Ascending aorta (tissue), 2 donors: ENCODE measurements at regions of chr11 and their contacts with region 1.

Region 1: DNA sequence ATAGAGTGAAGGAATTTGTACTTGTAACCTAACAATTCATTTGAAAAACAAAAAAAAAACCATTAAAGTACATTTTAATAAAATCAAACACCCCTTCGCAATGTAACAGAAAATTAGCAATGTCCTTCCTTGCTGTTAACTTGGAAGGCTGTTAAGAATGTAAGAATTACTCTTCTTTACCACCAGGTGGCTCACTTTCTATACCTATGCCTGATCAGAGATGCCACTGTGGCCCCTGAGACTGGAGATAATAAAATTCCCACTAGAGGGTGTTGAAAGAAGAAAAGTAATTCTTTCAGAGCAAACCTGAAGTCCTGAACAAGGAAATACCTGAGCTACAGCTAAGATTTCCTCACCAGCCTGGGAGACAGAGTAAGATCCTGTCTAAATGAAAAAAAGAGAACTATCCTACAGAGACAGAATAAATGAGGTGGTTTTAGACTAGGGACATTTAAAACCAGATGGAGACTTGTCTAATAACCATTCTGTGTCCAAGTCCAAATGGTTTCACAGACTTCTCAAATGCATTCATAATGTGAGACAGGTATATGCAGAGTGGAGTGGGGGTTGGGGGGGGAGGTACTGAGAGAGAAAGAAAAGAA is 1089.3 kb downstream of the FAM181B start:
- DNase-seq: no peak
- H3K4me3 ChIP-seq: no peak overlapping the region
- H3K27ac ChIP-seq: no peak overlapping the region
- H3K4me1 ChIP-seq: no peaks in the 10 kb centered on the region
- H3K27me3 ChIP-seq: no peaks in the 10 kb centered on the region
- CTCF ChIP-seq: peak in 2 of 3 experiments; percentile 23 to 52

Region 2: DNA sequence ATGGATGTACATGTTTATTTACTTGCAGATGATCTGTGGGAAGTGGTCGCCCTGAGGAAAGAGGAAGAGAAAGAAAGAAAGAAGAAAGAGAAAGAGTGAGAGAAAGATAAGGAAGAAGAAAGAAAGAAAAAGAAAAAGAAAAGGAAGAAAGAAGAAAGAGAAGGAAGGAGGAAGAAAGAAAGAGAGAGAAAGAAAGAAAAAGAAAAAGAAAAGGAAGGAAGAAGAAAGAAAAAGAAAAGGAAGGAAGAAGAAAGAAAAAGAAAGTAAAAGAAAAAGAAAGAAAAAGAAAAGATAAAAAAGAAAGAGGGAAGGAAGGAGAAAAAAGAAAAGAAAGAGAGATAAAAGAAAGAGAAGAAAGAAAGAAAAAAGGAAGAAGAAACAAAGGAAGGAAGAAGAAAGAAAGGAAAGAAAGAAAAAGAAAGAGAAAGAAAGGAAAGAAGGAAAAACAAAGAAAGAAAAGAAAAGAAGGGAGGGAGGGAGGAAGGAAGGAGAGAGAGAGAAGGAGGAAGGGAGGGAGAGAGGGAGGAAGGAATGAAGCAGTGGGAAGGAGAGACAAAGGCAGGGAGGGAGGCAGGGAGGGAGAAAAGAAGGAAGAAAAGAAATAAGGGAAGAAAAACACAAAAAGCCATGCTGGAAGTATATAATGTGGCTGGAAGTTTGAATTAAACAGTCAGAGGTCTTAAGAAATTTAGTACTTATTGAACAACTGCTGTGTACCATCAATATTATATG is 112.7 kb after region 1 on chr11:
- intact Hi-C with region 1: no loop called
- DNase-seq: no peak
- H3K4me3 ChIP-seq: no peak overlapping the region
- H3K27ac ChIP-seq: no peak overlapping the region
- H3K4me1 ChIP-seq: no peaks in the 10 kb centered on the region
- H3K27me3 ChIP-seq: no peaks in the 10 kb centered on the region
- CTCF ChIP-seq: no peak

Region 3: GRCh38 chr11:82038153-82038552 is 393.8 kb after region 1 on chr11:
- intact Hi-C with region 1: loop called (anchors 10 kb)
- DNase-seq: no peak
- H3K4me3 ChIP-seq: no peak overlapping the region
- H3K27ac ChIP-seq: no peak overlapping the region
- H3K4me1 ChIP-seq: no peaks in the 10 kb centered on the region
- H3K27me3 ChIP-seq: no peaks in the 10 kb centered on the region
- CTCF ChIP-seq: peak in 1 of 3 experiments; percentile 46